CD8-positive, alpha-beta T cell (primary cell): ENCODE measurements at regions of chr17 and their contacts with region 1.

Region 1: GRCh38 chr17:700504-701094 is 14.0 kb downstream of the VPS53 start:
- DNase-seq: peak in 2 of 9 experiments; percentile 59 to 70
- ATAC-seq: peak; percentile 74
- H3K4me3 ChIP-seq: no peak overlapping the region
- H3K4me3 Mint-ChIP-seq: no peak overlapping the region
- H3K27ac ChIP-seq: no peak overlapping the region
- H3K27ac Mint-ChIP-seq: no peak overlapping the region
- H3K4me1 ChIP-seq: no peaks in the 10 kb centered on the region
- H3K4me1 Mint-ChIP-seq: peaks cover 2% of the 10 kb centered on the region
- H3K27me3 ChIP-seq: no peaks in the 10 kb centered on the region
- H3K27me3 Mint-ChIP-seq: no peaks in the 10 kb centered on the region
- CTCF ChIP-seq: peak; percentile 84

Region 2: DNA sequence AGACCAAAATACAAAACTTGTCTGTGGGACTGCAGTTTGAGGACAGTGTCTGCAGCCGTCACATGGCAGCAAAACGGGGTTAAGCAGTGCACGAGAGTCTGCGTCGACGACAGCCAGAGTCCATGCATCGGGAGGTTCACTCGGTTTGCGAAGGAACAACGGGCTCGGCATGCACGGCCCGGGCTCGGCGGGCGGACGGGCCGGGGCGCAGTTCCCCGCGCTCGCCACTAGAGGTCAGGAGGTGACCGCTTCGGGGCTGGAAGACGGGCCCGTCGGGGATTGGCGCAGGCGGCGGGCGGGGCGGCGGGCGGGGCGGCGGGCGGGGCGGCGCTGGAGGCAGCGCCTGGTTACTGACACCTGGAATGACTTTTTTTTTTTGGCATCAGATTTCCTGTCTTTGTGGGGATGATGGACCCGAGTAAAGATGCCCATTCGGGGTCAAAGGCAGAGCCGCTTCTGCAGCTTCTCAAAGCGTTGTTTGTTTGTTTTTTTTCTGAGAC is 556.8 kb before region 1 on chr17:
- CTCF ChIA-PET with region 1: interaction called, 18 read pairs
- POLR2A ChIA-PET with region 1: no interaction called
- intact Hi-C with region 1: loop called (anchors 1 to 2 kb)
- DNase-seq: peak; percentile 69 to 92 (median 83)
- ATAC-seq: peak; percentile 99
- H3K4me3 ChIP-seq: no peak overlapping the region
- H3K4me3 Mint-ChIP-seq: no peak overlapping the region
- H3K27ac ChIP-seq: no peak overlapping the region
- H3K27ac Mint-ChIP-seq: no peak overlapping the region
- H3K4me1 ChIP-seq: peaks cover 3% of the 10 kb centered on the region
- H3K4me1 Mint-ChIP-seq: peaks cover 2% of the 10 kb centered on the region
- H3K27me3 ChIP-seq: no peaks in the 10 kb centered on the region
- H3K27me3 Mint-ChIP-seq: peaks cover 6% of the 10 kb centered on the region
- CTCF ChIP-seq: peak; percentile 94

Region 3: GRCh38 chr17:164303-165235 is 536.0 kb before region 1 on chr17:
- CTCF ChIA-PET with region 1: interaction called, 11 read pairs
- POLR2A ChIA-PET with region 1: no interaction called
- intact Hi-C with region 1: no loop called
- DNase-seq: peak in 5 of 9 experiments; percentile 9 to 57 (median 30)
- ATAC-seq: peak; percentile 34
- H3K4me3 ChIP-seq: no peak overlapping the region
- H3K4me3 Mint-ChIP-seq: no peak overlapping the region
- H3K27ac ChIP-seq: no peak overlapping the region
- H3K27ac Mint-ChIP-seq: peak overlapping the region; percentile 11
- H3K4me1 ChIP-seq: no peaks in the 10 kb centered on the region
- H3K4me1 Mint-ChIP-seq: no peaks in the 10 kb centered on the region
- H3K27me3 ChIP-seq: peaks cover 0 to 2% of the 10 kb centered on the region in 2 experiments
- H3K27me3 Mint-ChIP-seq: peaks cover 4% of the 10 kb centered on the region
- CTCF ChIP-seq: no peak

Region 4: DNA sequence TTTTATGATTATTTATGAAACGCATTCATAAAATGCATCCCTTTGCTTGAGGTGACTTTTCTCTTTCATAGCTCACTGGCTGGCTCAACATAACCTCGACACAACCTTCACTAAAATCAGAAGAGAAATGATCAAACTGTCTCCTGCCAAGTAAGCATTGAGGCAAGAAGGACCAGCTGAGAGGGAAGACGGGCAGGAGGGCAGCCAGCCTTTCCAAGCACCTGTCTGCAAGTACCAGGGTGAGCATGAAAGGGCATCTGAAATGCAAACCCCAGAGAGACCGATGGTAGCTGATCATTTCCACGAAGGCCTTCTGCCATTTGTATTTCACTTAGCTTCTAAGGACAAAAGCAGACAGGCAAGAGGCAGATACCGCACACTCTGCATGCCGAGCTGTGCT is 295.9 kb before region 1 on chr17:
- CTCF ChIA-PET with region 1: interaction called, 10 read pairs
- POLR2A ChIA-PET with region 1: no interaction called
- intact Hi-C with region 1: no loop called
- DNase-seq: no peak
- ATAC-seq: no peak
- H3K4me3 ChIP-seq: no peak overlapping the region
- H3K4me3 Mint-ChIP-seq: no peak overlapping the region
- H3K27ac ChIP-seq: no peak overlapping the region
- H3K27ac Mint-ChIP-seq: no peak overlapping the region
- H3K4me1 ChIP-seq: peaks cover 8% of the 10 kb centered on the region
- H3K4me1 Mint-ChIP-seq: peaks cover 9% of the 10 kb centered on the region
- H3K27me3 ChIP-seq: no peaks in the 10 kb centered on the region
- H3K27me3 Mint-ChIP-seq: no peaks in the 10 kb centered on the region
- CTCF ChIP-seq: no peak

Region 5: DNA sequence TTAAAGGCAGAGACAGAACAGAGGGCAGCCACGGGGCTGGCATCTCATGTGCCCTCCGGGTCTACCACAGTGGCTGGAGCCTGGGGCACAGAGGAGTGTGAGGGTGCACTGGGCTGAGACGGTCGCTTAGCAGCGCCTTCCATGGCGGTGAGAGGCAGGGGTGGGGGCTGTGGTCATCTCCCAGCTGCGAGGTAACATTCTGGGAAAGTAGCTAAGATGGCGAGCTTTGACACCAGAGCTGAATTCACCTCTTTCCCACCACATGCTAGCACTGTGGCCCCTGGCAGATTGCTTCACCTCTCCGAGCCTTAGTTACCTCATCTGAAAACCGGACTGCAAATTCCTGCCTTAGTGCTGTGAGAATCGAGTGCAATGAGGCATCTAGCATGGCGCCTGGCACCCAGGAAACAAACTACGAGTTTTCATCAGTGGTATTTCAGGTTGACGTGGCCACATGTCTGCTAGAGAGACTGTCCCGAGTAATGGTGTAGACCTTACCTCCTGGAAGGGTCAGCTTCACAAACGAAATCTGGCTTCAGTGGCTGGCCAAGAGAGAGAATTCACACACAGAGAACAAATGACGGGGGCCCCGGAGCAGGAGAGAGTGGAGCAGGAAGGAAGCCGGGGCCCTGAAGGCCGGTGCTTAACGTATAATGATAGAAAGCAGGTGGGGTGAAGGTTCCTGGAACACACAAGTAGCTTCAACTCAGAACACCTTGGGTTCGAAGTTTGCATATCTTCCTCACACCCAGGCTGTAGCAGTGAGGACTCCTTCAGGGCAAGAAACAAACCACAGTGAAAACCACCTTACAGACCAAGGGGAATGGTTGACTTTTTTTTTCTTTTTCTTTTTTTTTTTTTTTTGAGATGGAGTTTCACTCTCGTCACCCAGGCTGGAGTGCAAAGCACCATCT is 284.0 kb before region 1 on chr17:
- CTCF ChIA-PET with region 1: interaction called, 136 read pairs
- POLR2A ChIA-PET with region 1: interaction called, 13 read pairs
- intact Hi-C with region 1: loop called (anchors 1 kb)
- DNase-seq: peak in 6 of 9 experiments; percentile 22 to 80 (median 58)
- ATAC-seq: peak; percentile 20
- H3K4me3 ChIP-seq: peak overlapping the region; percentile 45 to 48
- H3K4me3 Mint-ChIP-seq: peak overlapping the region; percentile 76
- H3K27ac ChIP-seq: peak overlapping the region; percentile 60 to 79
- H3K27ac Mint-ChIP-seq: peak overlapping the region; percentile 97
- H3K4me1 ChIP-seq: peaks cover 81% of the 10 kb centered on the region
- H3K4me1 Mint-ChIP-seq: peaks cover 79% of the 10 kb centered on the region
- H3K27me3 ChIP-seq: no peaks in the 10 kb centered on the region
- H3K27me3 Mint-ChIP-seq: no peaks in the 10 kb centered on the region
- CTCF ChIP-seq: no peak

Region 6: GRCh38 chr17:596763-597644 is 103.6 kb before region 1 on chr17:
- CTCF ChIA-PET with region 1: no interaction called
- POLR2A ChIA-PET with region 1: no interaction called
- intact Hi-C with region 1: no loop called
- DNase-seq: no peak
- ATAC-seq: no peak
- H3K4me3 ChIP-seq: no peak overlapping the region
- H3K4me3 Mint-ChIP-seq: no peak overlapping the region
- H3K27ac ChIP-seq: no peak overlapping the region
- H3K27ac Mint-ChIP-seq: no peak overlapping the region
- H3K4me1 ChIP-seq: no peaks in the 10 kb centered on the region
- H3K4me1 Mint-ChIP-seq: no peaks in the 10 kb centered on the region
- H3K27me3 ChIP-seq: no peaks in the 10 kb centered on the region
- H3K27me3 Mint-ChIP-seq: no peaks in the 10 kb centered on the region
- CTCF ChIP-seq: no peak

Region 7: DNA sequence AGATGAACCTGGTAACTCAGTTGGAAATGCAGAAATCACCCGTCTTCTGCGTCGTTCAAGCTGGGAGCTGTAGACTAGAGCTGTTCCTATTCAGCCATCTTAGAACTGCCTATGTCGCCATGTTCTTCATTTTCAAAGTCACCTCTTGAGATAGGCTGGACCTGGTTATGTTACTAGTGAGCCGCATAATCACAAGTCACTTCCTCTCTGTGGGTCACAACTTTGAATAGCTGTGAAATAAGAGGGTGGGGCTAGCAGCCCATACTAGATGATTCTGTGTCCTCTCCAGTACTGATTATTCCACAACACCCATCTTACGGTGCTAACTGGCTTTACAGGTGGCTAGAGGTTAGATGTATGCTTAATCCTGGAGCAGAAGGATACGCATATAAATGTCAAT is 60.2 kb before region 1 on chr17:
- CTCF ChIA-PET with region 1: no interaction called
- POLR2A ChIA-PET with region 1: no interaction called
- intact Hi-C with region 1: no loop called
- DNase-seq: peak in 3 of 9 experiments; percentile 5 to 72 (median 52)
- ATAC-seq: no peak
- H3K4me3 ChIP-seq: no peak overlapping the region
- H3K4me3 Mint-ChIP-seq: no peak overlapping the region
- H3K27ac ChIP-seq: peak overlapping the region in 1 of 2 experiments; percentile 31
- H3K27ac Mint-ChIP-seq: no peak overlapping the region
- H3K4me1 ChIP-seq: no peaks in the 10 kb centered on the region
- H3K4me1 Mint-ChIP-seq: peaks cover 10% of the 10 kb centered on the region
- H3K27me3 ChIP-seq: no peaks in the 10 kb centered on the region
- H3K27me3 Mint-ChIP-seq: no peaks in the 10 kb centered on the region
- CTCF ChIP-seq: no peak